ENCODE measurements at regions of chr5 and their contacts with region 1.

Region 1: GRCh38 chr5:139517683-139518564 is 35.4 kb upstream of the STING1 start:
- DNase-seq: peak; percentile 72 to 95 (median 88)
- ATAC-seq: peak; percentile 92
- H3K4me3 ChIP-seq: peak overlapping the region; percentile 66
- H3K4me3 Mint-ChIP-seq: peak overlapping the region; percentile 88
- H3K27ac ChIP-seq: peak overlapping the region; percentile 64 to 66
- H3K27ac Mint-ChIP-seq: peak overlapping the region; percentile 87
- H3K4me1 ChIP-seq: peaks cover 22% of the 10 kb centered on the region
- H3K4me1 Mint-ChIP-seq: peaks cover 27% of the 10 kb centered on the region
- H3K27me3 ChIP-seq: no peaks in the 10 kb centered on the region
- H3K27me3 Mint-ChIP-seq: no peaks in the 10 kb centered on the region
- CTCF ChIP-seq: peak; percentile 95

Region 2: GRCh38 chr5:139287890-139288635 is 229.9 kb before region 1 on chr5:
- CTCF ChIA-PET with region 1: no interaction called
- POLR2A ChIA-PET with region 1: no interaction called
- intact Hi-C with region 1: loop called in 1 of 2 experiments (anchors 2 kb)
- DNase-seq: peak in 3 of 14 experiments; percentile 36 to 61 (median 49)
- ATAC-seq: peak; percentile 62
- H3K4me3 ChIP-seq: no peak overlapping the region
- H3K4me3 Mint-ChIP-seq: peak overlapping the region; percentile 12
- H3K27ac ChIP-seq: no peak overlapping the region
- H3K27ac Mint-ChIP-seq: peak overlapping the region; percentile 35
- H3K4me1 ChIP-seq: peaks cover 7% of the 10 kb centered on the region
- H3K4me1 Mint-ChIP-seq: peaks cover 4% of the 10 kb centered on the region
- H3K27me3 ChIP-seq: no peaks in the 10 kb centered on the region
- H3K27me3 Mint-ChIP-seq: no peaks in the 10 kb centered on the region
- CTCF ChIP-seq: peak; percentile 13

Region 3: GRCh38 chr5:139361835-139362429 is 156.0 kb before region 1 on chr5:
- CTCF ChIA-PET with region 1: no interaction called
- POLR2A ChIA-PET with region 1: no interaction called
- intact Hi-C with region 1: no loop called
- DNase-seq: no peak
- ATAC-seq: no peak
- H3K4me3 ChIP-seq: no peak overlapping the region
- H3K4me3 Mint-ChIP-seq: no peak overlapping the region
- H3K27ac ChIP-seq: no peak overlapping the region
- H3K27ac Mint-ChIP-seq: no peak overlapping the region
- H3K4me1 ChIP-seq: peaks cover 6% of the 10 kb centered on the region
- H3K4me1 Mint-ChIP-seq: peaks cover 29% of the 10 kb centered on the region
- H3K27me3 ChIP-seq: no peaks in the 10 kb centered on the region
- H3K27me3 Mint-ChIP-seq: no peaks in the 10 kb centered on the region
- CTCF ChIP-seq: no peak

Region 4: GRCh38 chr5:139474890-139475791 is 42.8 kb before region 1 on chr5:
- CTCF ChIA-PET with region 1: interaction called, 3 read pairs
- POLR2A ChIA-PET with region 1: interaction called, 43 read pairs
- intact Hi-C with region 1: loop called in 1 of 2 experiments (anchors 5 kb)
- DNase-seq: peak in 5 of 14 experiments; percentile 24 to 75 (median 55)
- ATAC-seq: peak; percentile 65
- H3K4me3 ChIP-seq: peak overlapping the region; percentile 7
- H3K4me3 Mint-ChIP-seq: peak overlapping the region; percentile 81
- H3K27ac ChIP-seq: peak overlapping the region in 1 of 2 donors; percentile 32
- H3K27ac Mint-ChIP-seq: peak overlapping the region; percentile 92
- H3K4me1 ChIP-seq: peaks cover 98% of the 10 kb centered on the region
- H3K4me1 Mint-ChIP-seq: peaks cover 82% of the 10 kb centered on the region
- H3K27me3 ChIP-seq: no peaks in the 10 kb centered on the region
- H3K27me3 Mint-ChIP-seq: no peaks in the 10 kb centered on the region
- CTCF ChIP-seq: no peak

Region 5: DNA sequence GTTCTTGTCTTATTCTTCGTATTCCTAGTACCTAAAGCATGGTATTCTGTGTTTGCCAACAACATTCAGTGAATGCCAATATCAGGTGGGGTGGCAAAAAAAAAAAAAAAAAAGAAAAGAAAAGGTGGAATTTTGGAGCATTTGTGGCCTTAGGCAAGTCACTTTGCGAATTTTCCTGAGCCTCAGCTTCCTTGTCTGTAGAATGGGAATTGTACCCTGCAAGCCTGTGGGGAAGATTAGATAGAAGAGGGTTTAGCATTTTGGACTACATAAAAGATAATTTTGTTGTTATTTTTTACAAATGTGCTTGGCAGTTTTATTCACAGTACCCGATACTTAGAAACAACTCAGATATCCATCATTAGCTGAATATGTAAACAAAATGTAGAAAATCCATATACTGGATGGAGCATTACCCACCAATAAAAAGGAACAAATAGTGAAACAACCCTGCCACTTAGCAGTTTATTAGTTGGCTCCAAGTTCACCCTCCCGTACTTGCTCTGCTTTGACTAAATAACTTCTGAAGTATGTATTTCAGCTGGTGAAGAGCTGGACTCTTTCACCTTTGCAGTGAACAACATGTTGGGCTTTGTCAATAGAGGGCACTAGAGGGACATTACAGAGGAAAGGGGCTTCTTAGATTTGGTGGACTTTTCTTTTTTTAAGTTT is 56.9 kb after region 1 on chr5:
- CTCF ChIA-PET with region 1: interaction called, 3 read pairs
- POLR2A ChIA-PET with region 1: no interaction called
- intact Hi-C with region 1: loop called in 1 of 2 experiments (anchors 5 kb)
- DNase-seq: peak in 4 of 14 experiments; percentile 28 to 73 (median 66)
- ATAC-seq: peak; percentile 37
- H3K4me3 ChIP-seq: no peak overlapping the region
- H3K4me3 Mint-ChIP-seq: peak overlapping the region; percentile 53
- H3K27ac ChIP-seq: no peak overlapping the region
- H3K27ac Mint-ChIP-seq: peak overlapping the region; percentile 92
- H3K4me1 ChIP-seq: peaks cover 62% of the 10 kb centered on the region
- H3K4me1 Mint-ChIP-seq: peaks cover 77% of the 10 kb centered on the region
- H3K27me3 ChIP-seq: no peaks in the 10 kb centered on the region
- H3K27me3 Mint-ChIP-seq: no peaks in the 10 kb centered on the region
- CTCF ChIP-seq: peak; percentile 79

Region 6: DNA sequence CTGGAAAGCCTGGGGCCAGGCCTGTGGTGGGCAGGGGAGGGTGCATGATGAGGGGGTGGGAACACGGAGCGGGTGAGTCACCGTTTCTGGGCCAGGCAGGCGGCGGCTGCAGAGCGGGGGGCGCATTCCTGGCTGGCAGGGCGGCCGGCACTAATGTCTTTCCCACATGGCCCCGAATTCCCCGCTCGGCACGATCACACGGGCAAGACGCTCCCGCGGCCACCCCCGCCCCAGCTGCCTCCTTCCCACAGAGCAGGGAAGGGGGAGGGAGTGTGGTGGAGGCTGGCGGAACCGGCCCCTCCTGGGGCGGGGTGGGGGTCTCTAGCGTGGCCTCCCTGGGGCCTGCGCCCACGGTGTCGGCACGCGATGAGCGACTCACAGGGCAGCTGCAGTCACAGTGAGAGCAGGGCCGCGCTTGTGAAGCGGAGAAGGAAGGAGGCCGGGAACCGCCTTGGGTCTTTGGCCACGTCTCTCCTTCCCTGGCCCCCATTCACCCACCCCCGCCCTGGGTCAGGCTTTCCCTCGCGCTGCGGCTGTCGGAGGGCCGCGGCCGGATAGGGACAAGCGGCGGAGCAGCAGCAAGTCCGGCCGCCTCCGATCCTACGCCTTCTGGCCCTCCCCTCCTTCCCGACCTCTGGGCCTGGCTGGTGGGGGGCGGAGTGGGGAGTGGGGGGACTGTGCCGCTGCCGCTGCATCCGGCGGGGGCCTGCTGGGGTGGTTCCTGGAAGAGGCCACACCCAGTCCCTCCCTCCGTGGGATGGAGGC is 179.2 kb after region 1 on chr5:
- CTCF ChIA-PET with region 1: no interaction called
- POLR2A ChIA-PET with region 1: no interaction called
- intact Hi-C with region 1: loop called in 1 of 2 experiments (anchors 10 kb)
- DNase-seq: peak in 5 of 14 experiments; percentile 5 to 49 (median 37)
- ATAC-seq: peak; percentile 62
- H3K4me3 ChIP-seq: peak overlapping the region; percentile 43
- H3K4me3 Mint-ChIP-seq: peak overlapping the region; percentile 83
- H3K27ac ChIP-seq: no peak overlapping the region
- H3K27ac Mint-ChIP-seq: no peak overlapping the region
- H3K4me1 ChIP-seq: peaks cover 26% of the 10 kb centered on the region
- H3K4me1 Mint-ChIP-seq: peaks cover 36% of the 10 kb centered on the region
- H3K27me3 ChIP-seq: peaks cover 21 to 26% of the 10 kb centered on the region in 2 experiments
- H3K27me3 Mint-ChIP-seq: peaks cover 42% of the 10 kb centered on the region
- CTCF ChIP-seq: no peak

Measured in CD4-positive, alpha-beta T cell (primary cell).